Gastrocnemius medialis (tissue), 4 donors: ENCODE measurements at regions of chr19 and their contacts with region 1.

Region 1: GRCh38 chr19:15432629-15433518 is 14.1 kb upstream of the AKAP8L start:
- DNase-seq: peak; percentile 83 to 88
- ATAC-seq: peak; percentile 82 to 84
- H3K4me3 ChIP-seq: peak overlapping the region; percentile 64 to 80 (median 74)
- H3K27ac ChIP-seq: peak overlapping the region; percentile 90 to 96 (median 94)
- H3K4me1 ChIP-seq: peaks cover 17 to 21% of the 10 kb centered on the region in 2 donors
- H3K27me3 ChIP-seq: no peaks in the 10 kb centered on the region
- CTCF ChIP-seq: peak in 1 of 5 experiments; percentile 4
- POLR2A ChIP-seq: peak; percentile 48 to 66

Region 2: GRCh38 chr19:15264061-15264932 is 168.6 kb before region 1 on chr19:
- in situ Hi-C with region 1: loop called in 2 of 4 experiments (anchors 25 kb)
- intact Hi-C with region 1: no loop called
- DNase-seq: peak in 1 of 2 donors; percentile 65
- ATAC-seq: peak; percentile 14 to 31
- H3K4me3 ChIP-seq: no peak overlapping the region
- H3K27ac ChIP-seq: peak overlapping the region; percentile 61 to 80 (median 68)
- H3K4me1 ChIP-seq: peaks cover 50 to 54% of the 10 kb centered on the region in 2 donors
- H3K27me3 ChIP-seq: no peaks in the 10 kb centered on the region
- CTCF ChIP-seq: peak; percentile 68 to 88 (median 78)
- POLR2A ChIP-seq: no peak

Region 3: GRCh38 chr19:15418588-15419412 is 14.1 kb before region 1 on chr19 and contains the start of gene AKAP8L:
- in situ Hi-C with region 1: no loop called
- intact Hi-C with region 1: loop called (anchors 1 kb)
- DNase-seq: peak; percentile 100
- ATAC-seq: peak; percentile 94 to 95
- H3K4me3 ChIP-seq: peak within 1 kb of the TSS; percentile 78 to 93 (median 90)
- H3K27ac ChIP-seq: peak within 1 kb of the TSS; percentile 91 to 97 (median 96)
- H3K4me1 ChIP-seq: peaks cover 54 to 60% of the 10 kb centered on the region in 2 donors
- H3K27me3 ChIP-seq: no peaks in the 10 kb centered on the region
- CTCF ChIP-seq: peak; percentile 42 to 64 (median 59)
- POLR2A ChIP-seq: peak; percentile 98 to 99
- total RNA-seq, gene AKAP8L: 69.3 to 142 (median 85.6) TPM

Region 4: GRCh38 chr19:15443838-15444237 is 11.0 kb after region 1 on chr19:
- in situ Hi-C with region 1: no loop called
- intact Hi-C with region 1: loop called (anchors 2 kb)
- DNase-seq: peak; percentile 47 to 86
- ATAC-seq: peak; percentile 24 to 46
- H3K4me3 ChIP-seq: no peak overlapping the region
- H3K27ac ChIP-seq: peak overlapping the region; percentile 97 to 99 (median 98)
- H3K4me1 ChIP-seq: peaks cover 40 to 44% of the 10 kb centered on the region in 2 donors
- H3K27me3 ChIP-seq: no peaks in the 10 kb centered on the region
- CTCF ChIP-seq: no peak
- POLR2A ChIP-seq: no peak